ENCODE measurements at regions of chr4 and their contacts with region 1.

Region 1: DNA sequence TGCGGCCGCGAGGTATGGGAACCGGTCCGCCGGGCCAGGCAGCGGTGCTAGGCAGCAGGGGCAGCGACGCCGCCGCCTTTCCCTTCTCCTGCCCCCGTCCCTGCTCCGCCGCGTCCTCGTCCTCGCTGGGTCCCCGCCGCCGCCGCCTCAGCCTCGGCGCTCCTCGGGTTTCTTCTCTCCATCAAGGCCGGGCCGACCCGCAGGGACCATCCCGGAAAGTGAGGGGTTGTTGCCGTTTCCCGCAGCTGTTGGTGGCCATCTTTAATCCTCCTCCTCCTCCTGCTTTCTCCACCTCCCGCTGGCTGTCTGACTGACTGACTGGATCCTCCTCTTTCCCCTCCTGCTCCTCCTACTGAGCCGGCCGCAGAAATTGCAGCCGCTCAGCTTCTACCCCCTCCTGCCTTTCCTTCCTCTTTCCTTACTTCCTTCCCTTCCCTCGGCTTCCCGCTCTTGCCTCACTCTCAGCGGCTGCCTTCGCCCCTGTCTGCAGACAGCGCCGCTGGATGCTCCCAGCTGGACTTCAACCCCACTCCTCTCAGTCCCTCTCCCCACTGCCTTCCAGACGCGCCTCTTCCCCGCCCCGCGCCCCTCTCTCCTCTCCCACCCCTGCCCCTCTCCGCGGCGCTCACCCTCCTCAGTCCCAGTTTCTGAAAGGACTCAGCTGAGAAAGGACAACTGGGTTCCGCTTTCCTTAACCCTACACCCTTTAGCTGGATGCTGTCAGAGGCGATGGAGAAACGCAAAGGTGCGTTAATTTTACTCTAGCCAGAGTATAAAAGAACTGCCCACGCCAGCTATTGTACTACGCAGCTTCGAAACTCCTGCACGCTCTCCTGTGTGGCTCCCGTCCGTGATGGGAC is at the start of gene WDFY3:
- DNase-seq: peak; percentile 20
- H3K4me3 Mint-ChIP-seq: peak within 1 kb of the TSS; percentile 71
- H3K27ac Mint-ChIP-seq: no peak within 1 kb of the TSS
- H3K4me1 Mint-ChIP-seq: peaks cover 10% of the 10 kb centered on the region
- H3K27me3 Mint-ChIP-seq: peaks cover 41% of the 10 kb centered on the region

Region 2: DNA sequence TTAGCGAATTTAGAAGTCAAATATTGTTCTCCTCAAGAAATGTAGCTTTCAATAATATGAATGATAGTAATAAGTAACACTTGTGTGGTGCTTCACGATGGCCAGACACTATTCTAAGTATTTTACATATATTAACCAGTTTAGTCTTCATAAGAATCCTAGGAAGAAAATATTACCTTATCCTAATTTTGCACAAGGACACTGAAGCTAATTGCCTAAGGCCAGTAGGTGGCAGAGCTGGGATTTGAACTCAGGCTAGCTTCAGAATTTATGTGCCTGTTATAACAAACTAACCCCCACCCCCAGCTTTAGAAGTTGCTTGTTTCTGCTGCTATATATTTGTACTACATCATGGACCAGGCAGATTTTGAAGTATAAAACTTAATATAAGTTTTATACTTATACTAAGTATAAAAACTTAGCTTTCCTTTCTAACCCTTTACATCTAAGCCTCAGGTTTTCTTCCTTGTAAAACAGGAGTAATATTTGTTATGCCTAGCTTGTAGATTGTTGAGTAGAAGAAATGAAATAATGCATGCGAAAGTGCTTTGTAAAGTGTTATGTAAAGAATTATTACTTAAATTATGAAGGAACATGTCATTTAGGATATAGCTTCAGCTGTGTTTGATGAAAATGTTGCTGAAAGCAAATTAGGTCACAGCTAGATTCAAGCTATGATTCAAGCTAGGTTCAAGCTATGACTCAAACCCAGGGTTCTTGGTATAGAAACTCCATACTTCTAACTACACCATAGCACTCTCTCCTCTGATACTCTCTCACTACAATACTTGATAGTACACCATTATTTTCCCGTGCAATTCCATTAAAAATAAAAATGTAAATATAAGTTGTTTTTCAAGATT is 387.8 kb before region 1 on chr4:
- CTCF ChIA-PET with region 1: interaction called, 23 read pairs
- DNase-seq: peak; percentile 33
- H3K4me3 Mint-ChIP-seq: no peak overlapping the region
- H3K27ac Mint-ChIP-seq: no peak overlapping the region
- H3K4me1 Mint-ChIP-seq: peaks cover 18% of the 10 kb centered on the region
- H3K27me3 Mint-ChIP-seq: peaks cover 29% of the 10 kb centered on the region

Region 3: GRCh38 chr4:84750253-84750959 is 216.2 kb before region 1 on chr4:
- CTCF ChIA-PET with region 1: interaction called, 15 read pairs
- DNase-seq: no peak
- H3K4me3 Mint-ChIP-seq: no peak overlapping the region
- H3K27ac Mint-ChIP-seq: no peak overlapping the region
- H3K4me1 Mint-ChIP-seq: no peaks in the 10 kb centered on the region
- H3K27me3 Mint-ChIP-seq: no peaks in the 10 kb centered on the region

Region 4: DNA sequence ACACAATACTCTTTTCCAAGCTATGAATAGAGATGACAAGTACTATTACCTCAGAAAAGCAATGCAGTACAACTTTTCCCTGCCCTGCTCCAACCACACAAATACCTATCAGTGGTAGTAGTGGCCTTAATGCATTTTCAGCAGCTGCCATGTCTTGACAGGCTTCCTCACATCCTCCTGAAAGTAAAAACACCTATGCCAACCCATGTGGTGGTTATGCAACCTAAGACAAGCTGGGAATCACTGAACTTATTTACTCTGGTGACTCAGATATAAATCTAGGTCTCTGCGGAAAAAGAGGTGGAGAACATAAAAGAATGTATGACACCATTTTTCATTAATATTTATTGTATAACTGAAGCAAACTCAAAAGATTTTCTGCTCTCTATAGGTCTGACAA is 14.6 kb before region 1 on chr4:
- CTCF ChIA-PET with region 1: no interaction called
- DNase-seq: no peak
- H3K4me3 Mint-ChIP-seq: no peak overlapping the region
- H3K27ac Mint-ChIP-seq: no peak overlapping the region
- H3K4me1 Mint-ChIP-seq: no peaks in the 10 kb centered on the region
- H3K27me3 Mint-ChIP-seq: no peaks in the 10 kb centered on the region

Measured in activated naive CD4-positive, alpha-beta T cell treated with anti-CD3 and anti-CD28 coated beads, Interleukin-2, amount 10 ng/mL, durations not matched to agents 7 days and 5 days (primary cell).